ENCODE measurements at regions of chr17 and their contacts with region 1.

Region 1: GRCh38 chr17:45307290-45308015 is 9.4 kb downstream of the MAP3K14 start:
- DNase-seq: peak; percentile 53
- H3K4me3 ChIP-seq: no peak overlapping the region
- H3K27ac ChIP-seq: peak overlapping the region; percentile 89
- H3K27me3 ChIP-seq: no peaks in the 10 kb centered on the region
- CTCF ChIP-seq: no peak

Region 2: DNA sequence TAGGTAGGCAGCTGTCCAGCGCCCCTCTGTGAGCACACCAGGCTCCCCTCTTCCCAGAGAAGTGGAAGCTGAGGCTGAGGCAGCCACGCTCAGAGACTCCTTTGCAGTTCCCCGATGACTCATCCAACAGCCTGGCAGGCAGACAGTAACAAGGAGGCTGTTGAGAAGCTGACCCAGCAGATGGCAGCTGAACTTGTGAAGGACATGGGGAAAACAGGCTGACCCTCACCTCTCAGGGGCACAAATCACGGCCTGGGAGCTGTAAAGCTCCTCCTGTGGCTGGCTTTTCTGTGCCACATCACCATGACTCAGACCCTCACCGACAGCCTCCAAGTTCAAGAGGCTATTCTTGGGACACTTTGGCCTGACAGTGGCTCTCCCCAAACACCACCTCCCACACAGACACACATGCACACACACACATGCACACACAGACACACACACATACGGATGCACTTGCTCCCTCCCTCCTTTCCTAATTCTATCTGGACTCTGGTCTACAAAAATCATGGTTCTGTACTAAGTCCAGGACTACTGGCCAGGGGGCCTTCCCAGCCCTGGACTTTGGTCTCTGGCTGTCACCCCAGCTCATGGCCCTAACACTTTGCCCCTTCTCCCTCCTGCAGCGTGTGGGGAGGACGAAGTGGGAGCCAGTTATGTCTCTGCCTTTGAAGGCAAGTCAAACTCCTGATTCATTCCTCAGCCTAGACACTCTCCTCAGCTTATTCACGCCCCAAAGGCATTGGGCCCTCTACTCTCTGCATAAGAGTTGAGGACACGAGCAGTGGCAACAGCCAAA is 13.8 kb before region 1 on chr17:
- CTCF ChIA-PET with region 1: interaction called, 3 read pairs
- POLR2A ChIA-PET with region 1: interaction called, 14 read pairs
- DNase-seq: peak; percentile 65
- H3K4me3 ChIP-seq: no peak overlapping the region
- H3K27ac ChIP-seq: peak overlapping the region; percentile 87
- H3K27me3 ChIP-seq: no peaks in the 10 kb centered on the region
- CTCF ChIP-seq: no peak; the same call in 1 of the 2 replicates

Measured in AG04450 (cell line).